Naive thymus-derived CD4-positive, alpha-beta T cell (primary cell): ENCODE measurements at regions of chr1 and their contacts with region 1.

Region 1: GRCh38 chr1:92858564-92859399 is 26.9 kb downstream of the RPL5 start:
- DNase-seq: peak in 8 of 9 donors; percentile 32 to 86 (median 80)
- ATAC-seq: peak; percentile 100
- H3K4me3 ChIP-seq: peak overlapping the region; percentile 17
- H3K4me3 Mint-ChIP-seq: peak overlapping the region; percentile 5 to 80 (median 70)
- H3K27ac ChIP-seq: peak overlapping the region; percentile 43
- H3K27ac Mint-ChIP-seq: peak overlapping the region; percentile 29 to 83 (median 55)
- H3K4me1 ChIP-seq: peaks cover 0 to 3% of the 10 kb centered on the region in 2 donors
- H3K4me1 Mint-ChIP-seq: peaks cover 15 to 32% (median 22%) of the 10 kb centered on the region in 7 donors
- H3K27me3 ChIP-seq: no peaks in the 10 kb centered on the region
- H3K27me3 Mint-ChIP-seq: no peaks in the 10 kb centered on the region

Region 2: GRCh38 chr1:92831762-92832536 is 26.8 kb before region 1 on chr1 and contains the start of gene RPL5:
- CTCF ChIA-PET with region 1: interaction called, 8 read pairs
- POLR2A ChIA-PET with region 1: interaction called, 4 read pairs
- intact Hi-C with region 1: loop called in 1 of 2 experiments (anchors 2 kb)
- DNase-seq: peak; percentile 94 to 99 (median 98)
- ATAC-seq: peak; percentile 95
- H3K4me3 ChIP-seq: peak within 1 kb of the TSS; percentile 94
- H3K4me3 Mint-ChIP-seq: peak within 1 kb of the TSS; percentile 94 to 100 (median 98)
- H3K27ac ChIP-seq: peak within 1 kb of the TSS; percentile 94
- H3K27ac Mint-ChIP-seq: peak within 1 kb of the TSS; percentile 98 to 100 (median 99)
- H3K4me1 ChIP-seq: peaks cover 16 to 30% of the 10 kb centered on the region in 2 donors
- H3K4me1 Mint-ChIP-seq: peaks cover 29 to 54% (median 44%) of the 10 kb centered on the region in 7 donors
- H3K27me3 ChIP-seq: no peaks in the 10 kb centered on the region
- H3K27me3 Mint-ChIP-seq: peaks cover 0 to 5% (median 0%) of the 10 kb centered on the region in 5 donors
- total RNA-seq, gene RPL5: 764 to 1,693 (median 1,596) TPM

Region 3: DNA sequence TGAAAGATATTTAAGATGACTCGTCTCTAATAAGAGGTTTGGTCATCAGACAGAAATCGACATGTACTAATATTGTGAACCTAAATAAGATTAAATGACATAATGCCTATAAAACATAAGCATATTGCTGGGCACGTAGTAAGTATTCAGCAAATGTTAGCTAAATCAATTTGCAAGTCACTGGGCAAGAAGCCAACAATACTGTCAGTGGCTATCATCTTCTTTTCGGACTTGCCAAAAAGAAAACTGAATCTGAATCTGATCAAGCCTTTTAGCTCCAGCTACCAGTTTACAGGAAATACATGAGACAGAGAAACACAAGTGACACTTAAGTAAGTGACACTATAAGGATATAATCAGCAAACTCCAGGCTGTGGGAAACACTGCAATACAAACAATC is 19.0 kb after region 1 on chr1:
- CTCF ChIA-PET with region 1: interaction called, 18 read pairs
- POLR2A ChIA-PET with region 1: interaction called, 8 read pairs
- intact Hi-C with region 1: no loop called
- DNase-seq: peak in 1 of 9 donors; percentile 16
- ATAC-seq: no peak
- H3K4me3 ChIP-seq: peak overlapping the region; percentile 15
- H3K4me3 Mint-ChIP-seq: peak overlapping the region in 8 of 10 donors; percentile 58 to 75 (median 68)
- H3K27ac ChIP-seq: peak overlapping the region; percentile 53
- H3K27ac Mint-ChIP-seq: peak overlapping the region; percentile 51 to 94 (median 84)
- H3K4me1 ChIP-seq: peaks cover 18 to 22% of the 10 kb centered on the region in 2 donors
- H3K4me1 Mint-ChIP-seq: peaks cover 24 to 47% (median 42%) of the 10 kb centered on the region in 7 donors
- H3K27me3 ChIP-seq: no peaks in the 10 kb centered on the region
- H3K27me3 Mint-ChIP-seq: no peaks in the 10 kb centered on the region

Region 4: GRCh38 chr1:92901699-92902405 is 43.1 kb after region 1 on chr1:
- CTCF ChIA-PET with region 1: interaction called, 3 read pairs
- POLR2A ChIA-PET with region 1: no interaction called
- intact Hi-C with region 1: loop called in 1 of 2 experiments (anchors 2 kb)
- DNase-seq: no peak
- ATAC-seq: no peak
- H3K4me3 ChIP-seq: no peak overlapping the region
- H3K4me3 Mint-ChIP-seq: no peak overlapping the region
- H3K27ac ChIP-seq: no peak overlapping the region
- H3K27ac Mint-ChIP-seq: peak overlapping the region in 2 of 9 donors; percentile 28 to 65
- H3K4me1 ChIP-seq: no peaks in the 10 kb centered on the region
- H3K4me1 Mint-ChIP-seq: peaks cover 13 to 38% (median 32%) of the 10 kb centered on the region in 7 donors
- H3K27me3 ChIP-seq: no peaks in the 10 kb centered on the region
- H3K27me3 Mint-ChIP-seq: no peaks in the 10 kb centered on the region

Region 5: DNA sequence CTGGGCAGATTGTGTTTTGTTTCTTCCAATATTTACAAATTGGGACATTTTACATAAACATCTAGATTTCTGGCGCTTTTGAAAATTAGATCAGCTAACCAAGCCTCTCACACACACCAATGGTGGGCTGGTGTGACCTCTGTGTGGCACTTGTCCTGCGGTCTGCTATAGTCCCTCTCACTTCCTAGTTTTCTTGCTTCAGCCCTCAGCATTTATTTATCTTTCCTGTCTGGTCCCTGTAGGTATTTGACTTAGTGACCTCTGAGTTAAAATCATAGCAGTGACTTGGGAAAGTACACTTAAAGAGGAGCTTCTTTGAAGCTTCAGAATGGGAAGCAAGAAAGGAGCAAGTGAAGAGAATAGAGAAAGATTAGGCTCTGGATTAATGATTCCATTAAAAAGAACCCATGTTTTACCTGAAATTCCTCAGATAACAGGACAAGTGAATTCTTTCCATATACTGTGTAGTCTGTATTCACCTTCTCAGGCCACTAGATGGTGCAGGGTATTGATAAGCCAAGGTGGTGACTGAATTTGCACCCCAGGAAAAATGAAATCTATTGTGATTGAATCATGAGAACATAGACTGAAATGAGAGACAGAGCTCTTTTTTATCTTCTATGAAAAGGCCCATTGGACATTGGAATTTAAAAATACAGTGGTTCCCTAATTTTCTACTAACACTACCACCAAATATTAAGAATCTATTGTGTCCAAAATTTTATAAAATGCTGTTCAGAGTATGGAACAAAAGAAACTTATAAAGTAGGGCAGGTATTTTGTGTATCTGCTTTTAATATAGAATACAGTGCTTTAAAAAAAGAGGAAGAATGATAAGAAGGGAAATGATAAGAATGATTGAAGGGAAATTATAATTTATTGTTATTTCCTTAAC is 109.6 kb after region 1 on chr1:
- CTCF ChIA-PET with region 1: interaction called, 109 read pairs
- POLR2A ChIA-PET with region 1: interaction called, 5 read pairs
- intact Hi-C with region 1: loop called (anchors 2 kb)
- DNase-seq: peak in 7 of 9 donors; percentile 22 to 60 (median 41)
- ATAC-seq: peak; percentile 72
- H3K4me3 ChIP-seq: no peak overlapping the region
- H3K4me3 Mint-ChIP-seq: no peak overlapping the region
- H3K27ac ChIP-seq: no peak overlapping the region
- H3K27ac Mint-ChIP-seq: peak overlapping the region in 7 of 9 donors; percentile 6 to 69 (median 44)
- H3K4me1 ChIP-seq: peaks cover 29 to 45% of the 10 kb centered on the region in 2 donors
- H3K4me1 Mint-ChIP-seq: peaks cover 22 to 33% (median 31%) of the 10 kb centered on the region in 7 donors
- H3K27me3 ChIP-seq: no peaks in the 10 kb centered on the region
- H3K27me3 Mint-ChIP-seq: no peaks in the 10 kb centered on the region

Region 6: GRCh38 chr1:92987462-92987861 is 128.7 kb after region 1 on chr1:
- CTCF ChIA-PET with region 1: interaction called, 121 read pairs
- POLR2A ChIA-PET with region 1: interaction called, 3 read pairs
- intact Hi-C with region 1: no loop called
- DNase-seq: no peak
- ATAC-seq: no peak
- H3K4me3 ChIP-seq: no peak overlapping the region
- H3K4me3 Mint-ChIP-seq: no peak overlapping the region
- H3K27ac ChIP-seq: no peak overlapping the region
- H3K27ac Mint-ChIP-seq: no peak overlapping the region
- H3K4me1 ChIP-seq: peaks cover 32 to 33% of the 10 kb centered on the region in 2 donors
- H3K4me1 Mint-ChIP-seq: peaks cover 25 to 47% (median 41%) of the 10 kb centered on the region in 7 donors
- H3K27me3 ChIP-seq: no peaks in the 10 kb centered on the region
- H3K27me3 Mint-ChIP-seq: no peaks in the 10 kb centered on the region

Region 7: DNA sequence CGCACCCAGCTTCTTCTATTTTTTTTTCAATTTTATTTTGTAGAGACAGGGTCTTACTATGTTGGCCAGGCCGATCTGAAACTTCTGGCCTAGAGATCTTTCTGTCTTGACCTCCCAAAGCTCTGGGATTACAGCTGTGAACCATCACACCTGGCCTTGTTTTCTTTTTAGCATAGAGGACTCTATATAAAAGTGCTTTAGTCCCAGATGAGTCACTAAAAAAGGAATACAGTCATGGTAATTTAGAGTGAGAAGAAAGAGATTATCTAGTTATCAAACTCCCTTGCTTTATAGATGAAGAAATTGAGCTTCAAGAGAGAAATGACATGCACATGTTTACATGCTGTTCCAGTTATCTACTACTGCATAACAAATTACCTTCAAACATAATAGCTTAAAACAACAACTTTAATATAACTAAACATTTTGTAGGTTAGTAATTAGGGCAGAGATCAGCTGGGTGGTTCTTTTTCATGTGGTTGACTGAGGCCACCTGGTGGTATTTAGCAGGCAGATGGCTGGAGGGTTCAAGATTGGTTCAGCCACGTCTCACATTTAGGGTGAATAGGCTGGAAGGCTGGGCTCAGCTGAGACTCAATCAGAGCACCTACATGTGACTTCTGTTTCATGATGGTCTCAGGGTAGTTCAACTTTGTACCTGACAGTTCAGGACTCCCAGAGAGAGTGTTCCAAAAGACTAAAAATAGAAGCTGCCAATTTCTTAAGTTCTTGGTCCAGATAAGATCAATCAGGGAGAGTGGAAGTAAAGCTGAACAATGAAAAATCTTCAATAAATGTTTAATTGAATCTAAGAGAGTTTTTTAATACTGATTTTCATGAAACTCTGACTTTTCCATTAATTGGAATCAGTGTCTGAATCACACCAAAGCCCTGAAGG is 203.4 kb after region 1 on chr1:
- CTCF ChIA-PET with region 1: interaction called, 5 read pairs
- POLR2A ChIA-PET with region 1: no interaction called
- intact Hi-C with region 1: loop called (anchors 1 kb)
- DNase-seq: peak in 7 of 9 donors; percentile 14 to 54 (median 49)
- ATAC-seq: peak; percentile 80
- H3K4me3 ChIP-seq: no peak overlapping the region
- H3K4me3 Mint-ChIP-seq: no peak overlapping the region
- H3K27ac ChIP-seq: no peak overlapping the region
- H3K27ac Mint-ChIP-seq: peak overlapping the region in 1 of 9 donors; percentile 23
- H3K4me1 ChIP-seq: no peaks in the 10 kb centered on the region
- H3K4me1 Mint-ChIP-seq: peaks cover 0 to 6% (median 3%) of the 10 kb centered on the region in 7 donors
- H3K27me3 ChIP-seq: peaks cover 0 to 1% of the 10 kb centered on the region in 2 donors
- H3K27me3 Mint-ChIP-seq: peaks cover 5 to 53% (median 16%) of the 10 kb centered on the region in 5 donors